PC-3 (cell line): ENCODE measurements at regions of chr18 and their contacts with region 1.

Region 1: DNA sequence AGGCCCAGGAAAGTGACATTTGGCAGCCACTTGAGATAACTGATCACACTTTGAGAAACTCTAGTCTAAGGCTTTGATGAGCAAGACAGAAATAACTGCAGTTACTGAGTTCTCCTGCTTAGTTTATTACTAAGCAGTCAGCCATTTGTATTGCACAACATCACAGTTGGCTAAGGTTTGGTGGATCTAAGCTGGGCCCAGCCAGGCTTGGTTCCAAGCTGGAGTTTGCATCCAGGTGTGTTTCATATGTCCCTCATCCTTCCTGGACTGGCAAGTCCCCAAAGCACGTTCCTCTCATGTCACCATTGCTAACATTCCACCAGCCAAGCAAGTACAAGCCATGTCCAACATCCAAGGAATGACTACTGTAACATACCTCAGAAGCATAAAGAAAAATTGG is 71.3 kb upstream of the ZNF532 start:
- DNase-seq: peak; percentile 98
- ATAC-seq: peak; percentile 18
- H3K4me3 ChIP-seq: no peak overlapping the region
- H3K27ac ChIP-seq: peak overlapping the region; percentile 69
- H3K4me1 ChIP-seq: peaks cover 40% of the 10 kb centered on the region
- H3K27me3 ChIP-seq: no peaks in the 10 kb centered on the region
- CTCF ChIP-seq: no peak

Region 2: DNA sequence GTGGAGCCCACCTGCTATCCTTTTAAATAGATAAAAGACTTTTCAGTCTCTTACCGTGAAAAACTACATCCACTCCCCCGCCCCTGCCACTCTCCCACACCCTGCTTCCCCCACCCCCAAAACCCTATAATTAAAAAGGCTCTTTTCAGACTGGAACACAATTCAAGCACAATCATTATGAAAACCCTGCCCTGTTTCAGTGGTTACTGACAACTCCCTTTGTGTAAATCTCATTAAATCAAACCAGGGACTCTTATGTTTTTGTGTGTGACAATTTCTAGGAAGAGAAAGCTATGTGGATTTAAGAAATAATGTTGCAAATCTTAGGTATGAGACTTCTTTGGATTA is 50.3 kb after region 1 on chr18:
- CTCF ChIA-PET with region 1: no interaction called
- POLR2A ChIA-PET with region 1: interaction called, 11 read pairs
- intact Hi-C with region 1: no loop called
- DNase-seq: no peak
- ATAC-seq: peak; percentile 50; the same call in 1 of the 2 replicates
- H3K4me3 ChIP-seq: no peak overlapping the region
- H3K27ac ChIP-seq: no peak overlapping the region
- H3K4me1 ChIP-seq: peaks cover 4% of the 10 kb centered on the region; the same call in 1 of the 2 replicates
- H3K27me3 ChIP-seq: no peaks in the 10 kb centered on the region
- CTCF ChIP-seq: no peak

Region 3: DNA sequence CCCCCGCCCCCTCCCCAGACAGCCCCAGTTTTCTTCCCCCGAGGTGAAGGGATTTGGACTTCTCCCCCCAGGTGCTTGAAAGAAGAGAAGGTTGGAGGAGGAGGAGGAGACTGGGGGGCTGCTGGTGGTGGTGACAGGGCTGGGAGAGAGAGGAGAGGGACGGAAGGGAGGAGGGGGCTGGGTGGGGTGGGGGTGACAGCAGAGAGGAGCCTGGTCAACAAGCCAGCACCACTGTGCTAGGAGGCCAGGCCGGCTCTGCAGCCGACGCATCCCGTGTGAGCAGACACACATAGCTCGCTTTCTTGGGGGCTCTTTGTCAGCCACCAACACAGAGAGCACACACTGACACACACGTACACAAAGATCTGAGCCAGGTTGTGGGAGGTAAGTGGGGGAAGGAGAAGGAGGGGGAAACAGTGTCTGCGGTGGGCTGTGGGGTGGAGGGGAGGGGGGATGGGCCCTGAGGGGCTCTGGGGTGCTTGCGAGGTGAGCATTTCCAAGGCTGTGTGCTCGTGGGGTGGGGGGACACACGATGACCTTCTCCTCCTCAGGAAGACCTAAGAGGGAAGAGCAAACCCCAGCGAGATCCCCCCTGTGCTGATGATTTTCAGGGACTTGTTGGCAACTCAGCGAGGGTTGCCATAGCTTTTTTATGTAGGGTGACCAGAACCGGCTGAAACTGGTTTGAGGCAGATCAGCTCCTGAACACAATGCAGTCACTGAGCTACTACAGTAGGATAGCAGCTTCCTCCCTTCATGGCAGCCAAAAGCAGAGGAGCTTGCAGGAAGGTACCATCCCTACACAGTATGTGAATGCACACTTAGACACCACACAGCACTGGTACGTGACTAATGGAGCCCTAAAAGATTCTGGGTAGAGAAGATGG is 71.0 kb after region 1 on chr18 and contains the start of gene ZNF532:
- CTCF ChIA-PET with region 1: no interaction called
- POLR2A ChIA-PET with region 1: interaction called, 3 read pairs
- intact Hi-C with region 1: loop called (anchors 1 kb)
- DNase-seq: peak; percentile 68
- ATAC-seq: peak; percentile 53
- H3K4me3 ChIP-seq: peak within 1 kb of the TSS; percentile 62
- H3K27ac ChIP-seq: peak within 1 kb of the TSS; percentile 87
- H3K4me1 ChIP-seq: peaks cover 71% of the 10 kb centered on the region
- H3K27me3 ChIP-seq: no peaks in the 10 kb centered on the region
- CTCF ChIP-seq: no peak
- total RNA-seq, gene ZNF532: 47.3 and 62.6 TPM in 2 replicates

Region 4: GRCh38 chr18:59008301-59008974 is 215.1 kb after region 1 on chr18:
- CTCF ChIA-PET with region 1: interaction called, 10 read pairs
- POLR2A ChIA-PET with region 1: no interaction called
- intact Hi-C with region 1: no loop called
- DNase-seq: peak; percentile 88
- ATAC-seq: peak; percentile 97
- H3K4me3 ChIP-seq: peak overlapping the region; percentile 49
- H3K27ac ChIP-seq: peak overlapping the region; percentile 64
- H3K4me1 ChIP-seq: peaks cover 14% of the 10 kb centered on the region; the same call in 1 of the 2 replicates
- H3K27me3 ChIP-seq: no peaks in the 10 kb centered on the region
- CTCF ChIP-seq: peak; percentile 20; the same call in 1 of the 2 replicates